ENCODE measurements at regions of chrX and their contacts with region 1.

Region 1: DNA sequence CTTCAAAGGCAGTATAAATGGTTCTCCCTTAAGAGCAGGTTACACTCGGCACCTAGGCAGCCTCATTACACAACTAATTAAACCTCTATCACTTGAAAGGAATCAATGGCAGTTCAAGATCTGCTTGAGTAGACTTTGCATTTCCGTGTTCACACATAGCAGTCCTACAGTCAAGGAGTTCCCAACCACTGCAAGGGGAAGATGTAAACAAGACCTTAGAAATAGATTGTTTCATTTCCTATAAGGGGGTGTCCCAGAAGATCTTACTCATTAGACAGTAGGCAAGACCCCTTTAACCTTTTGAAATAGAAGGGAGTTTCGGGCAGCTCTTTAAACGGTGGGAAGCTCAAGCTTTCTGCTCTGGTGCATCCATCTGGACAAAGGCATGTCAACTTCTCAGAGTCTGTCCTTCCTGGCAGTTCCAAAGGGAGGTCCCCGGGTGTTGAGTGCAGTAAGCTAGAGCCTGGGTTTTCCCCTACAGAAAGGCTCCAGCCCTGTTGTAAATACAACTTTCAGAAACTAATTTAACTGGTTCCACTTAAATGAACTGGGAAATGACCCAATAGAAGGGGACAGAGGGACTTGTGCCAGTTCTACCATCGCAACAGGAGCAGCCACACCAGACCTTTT is 150.8 kb downstream of the RBMX2 start:
- DNase-seq: peak; percentile 40
- ATAC-seq: peak; percentile 70
- H3K4me3 ChIP-seq: peak overlapping the region in 2 of 5 experiments; percentile 2 to 5
- H3K4me3 Mint-ChIP-seq: peak overlapping the region; percentile 67
- H3K27ac ChIP-seq: peak overlapping the region in 1 of 2 donors; percentile 10
- H3K27ac Mint-ChIP-seq: peak overlapping the region; percentile 41
- H3K4me1 ChIP-seq: peaks cover 7 to 29% of the 10 kb centered on the region in 2 donors
- H3K4me1 Mint-ChIP-seq: peaks cover 40% of the 10 kb centered on the region
- H3K27me3 ChIP-seq: no peaks in the 10 kb centered on the region
- H3K27me3 Mint-ChIP-seq: no peaks in the 10 kb centered on the region
- CTCF ChIP-seq: no peak

Region 2: GRCh38 chrX:130539721-130540321 is 12.7 kb before region 1 on chrX:
- CTCF ChIA-PET with region 1: interaction called, 16 read pairs
- POLR2A ChIA-PET with region 1: no interaction called
- intact Hi-C with region 1: no loop called
- DNase-seq: peak; percentile 47
- ATAC-seq: no peak
- H3K4me3 ChIP-seq: no peak overlapping the region
- H3K4me3 Mint-ChIP-seq: no peak overlapping the region
- H3K27ac ChIP-seq: no peak overlapping the region
- H3K27ac Mint-ChIP-seq: no peak overlapping the region
- H3K4me1 ChIP-seq: no peaks in the 10 kb centered on the region
- H3K4me1 Mint-ChIP-seq: no peaks in the 10 kb centered on the region
- H3K27me3 ChIP-seq: no peaks in the 10 kb centered on the region
- H3K27me3 Mint-ChIP-seq: peaks cover 13% of the 10 kb centered on the region
- CTCF ChIP-seq: peak; percentile 71